Activated CD8-positive, alpha-beta T cell treated with anti-CD3 and anti-CD28 coated beads, Interleukin-2, amount 10 ng/mL, durations not matched to agents 7 days and 5 days (primary cell): ENCODE measurements at regions of chr9 and their contacts with region 1.

Region 1: DNA sequence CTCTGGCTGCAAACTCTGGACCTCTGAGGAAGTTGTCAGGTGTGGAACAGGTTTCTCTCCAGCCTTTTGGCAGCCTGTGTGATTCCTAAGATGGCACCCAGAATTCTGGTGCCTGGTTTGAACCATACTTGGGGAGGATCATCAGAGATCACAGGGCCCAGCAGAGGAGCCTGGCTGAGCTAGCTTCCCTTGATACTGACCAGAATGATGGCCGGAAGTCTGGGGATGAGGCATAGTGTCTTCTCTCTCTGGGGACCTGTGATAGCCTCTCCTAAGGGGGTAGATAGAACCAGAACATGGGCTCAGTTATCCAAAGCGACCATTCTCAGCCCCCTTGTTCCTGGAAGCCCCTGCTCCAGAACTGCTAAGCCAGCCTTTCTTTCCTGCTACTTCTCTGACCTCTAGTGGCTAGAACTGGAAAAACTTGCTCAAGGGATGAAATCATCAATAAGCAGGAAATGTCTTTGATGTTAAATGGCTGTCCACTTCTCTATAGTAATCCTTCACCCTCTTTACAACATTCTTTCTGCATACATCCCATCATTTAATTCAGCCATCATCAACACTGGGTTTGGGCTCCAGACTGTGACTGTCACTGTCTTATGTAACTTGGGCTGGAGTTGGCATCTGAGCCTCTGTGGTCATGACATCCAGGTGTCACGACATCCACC is 55.1 kb downstream of the C9orf152 start:
- DNase-seq: peak; percentile 60
- ATAC-seq: no peak
- H3K4me3 Mint-ChIP-seq: no peak overlapping the region
- H3K27ac Mint-ChIP-seq: peak overlapping the region; percentile 77
- H3K4me1 Mint-ChIP-seq: peaks cover 86% of the 10 kb centered on the region
- H3K27me3 Mint-ChIP-seq: no peaks in the 10 kb centered on the region

Region 2: GRCh38 chr9:109868722-109869121 is 284.1 kb before region 1 on chr9:
- CTCF ChIA-PET with region 1: no interaction called
- POLR2A ChIA-PET with region 1: no interaction called
- DNase-seq: no peak
- ATAC-seq: no peak
- H3K4me3 Mint-ChIP-seq: no peak overlapping the region
- H3K27ac Mint-ChIP-seq: no peak overlapping the region
- H3K4me1 Mint-ChIP-seq: no peaks in the 10 kb centered on the region
- H3K27me3 Mint-ChIP-seq: peaks cover 33% of the 10 kb centered on the region

Region 3: GRCh38 chr9:109969011-109969410 is 183.8 kb before region 1 on chr9:
- CTCF ChIA-PET with region 1: interaction called, 12 read pairs
- POLR2A ChIA-PET with region 1: interaction called, 6 read pairs
- DNase-seq: no peak
- ATAC-seq: peak; percentile 38
- H3K4me3 Mint-ChIP-seq: no peak overlapping the region
- H3K27ac Mint-ChIP-seq: peak overlapping the region; percentile 73
- H3K4me1 Mint-ChIP-seq: peaks cover 47% of the 10 kb centered on the region
- H3K27me3 Mint-ChIP-seq: peaks cover 18% of the 10 kb centered on the region

Region 4: DNA sequence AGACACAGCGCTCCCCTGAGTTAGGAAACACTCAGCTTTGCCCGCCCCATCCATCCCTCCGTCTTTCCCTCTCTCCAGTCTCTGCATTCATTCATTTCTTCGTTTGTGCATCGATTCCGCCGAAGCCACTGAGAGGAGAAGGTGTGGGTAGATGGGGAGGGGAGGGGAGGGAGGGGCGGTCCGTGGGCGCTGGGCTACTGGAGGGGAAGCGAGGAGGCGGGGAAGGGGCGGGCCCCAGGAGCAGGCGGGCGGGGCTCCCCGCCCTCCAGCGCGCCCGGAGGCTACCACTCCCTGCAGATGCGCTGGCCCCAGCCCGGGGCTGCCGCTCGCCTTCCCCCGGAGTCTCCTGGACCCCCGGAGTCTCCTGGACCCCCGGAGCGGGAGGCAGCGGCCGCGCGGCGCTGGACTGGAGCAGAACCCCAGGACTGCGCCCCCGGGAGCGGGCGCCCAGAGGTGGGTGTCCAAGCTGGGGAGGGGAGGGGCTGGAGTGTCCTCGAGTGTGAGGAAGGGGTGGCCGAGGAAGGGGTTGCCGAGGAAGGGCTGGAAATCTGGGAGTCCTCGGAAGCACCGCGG is 104.3 kb before region 1 on chr9:
- CTCF ChIA-PET with region 1: interaction called, 69 read pairs
- POLR2A ChIA-PET with region 1: interaction called, 56 read pairs
- DNase-seq: peak; percentile 84
- ATAC-seq: peak; percentile 95
- H3K4me3 Mint-ChIP-seq: peak overlapping the region; percentile 90
- H3K27ac Mint-ChIP-seq: peak overlapping the region; percentile 75
- H3K4me1 Mint-ChIP-seq: peaks cover 48% of the 10 kb centered on the region
- H3K27me3 Mint-ChIP-seq: peaks cover 15% of the 10 kb centered on the region

Region 5: DNA sequence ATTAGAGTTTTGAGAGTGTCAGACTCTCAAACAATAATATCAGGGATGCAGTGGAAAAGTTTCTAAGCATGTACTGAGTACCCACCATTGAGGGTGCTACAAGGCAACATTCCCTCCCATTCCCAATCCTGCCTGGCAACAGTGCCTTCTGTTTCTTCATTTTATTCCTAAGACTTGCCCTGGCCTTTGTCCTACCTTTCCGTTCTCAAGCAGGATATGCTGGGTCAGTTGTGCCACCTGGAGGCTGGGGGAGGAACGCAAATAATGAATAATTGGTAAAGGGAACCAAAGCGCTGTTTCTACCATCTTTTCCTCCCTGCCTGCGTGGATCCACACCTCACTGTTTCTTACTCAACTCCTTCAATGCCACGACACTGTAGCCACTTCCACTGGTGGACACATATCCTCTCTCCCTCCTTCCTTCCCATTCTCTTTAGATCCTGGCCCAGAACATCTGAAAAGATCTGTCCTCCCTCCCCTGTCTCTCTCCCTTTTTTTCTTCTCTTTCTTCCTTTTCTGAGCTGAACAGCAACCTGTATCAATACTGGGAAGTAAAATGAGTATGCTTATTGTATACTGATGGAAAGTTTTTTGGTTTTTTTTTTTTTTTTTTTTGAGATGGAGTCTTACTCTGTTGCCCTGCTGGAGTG is 94.4 kb before region 1 on chr9:
- CTCF ChIA-PET with region 1: interaction called, 69 read pairs
- POLR2A ChIA-PET with region 1: interaction called, 3 read pairs
- DNase-seq: peak; percentile 60
- ATAC-seq: no peak
- H3K4me3 Mint-ChIP-seq: no peak overlapping the region
- H3K27ac Mint-ChIP-seq: peak overlapping the region; percentile 47
- H3K4me1 Mint-ChIP-seq: peaks cover 8% of the 10 kb centered on the region
- H3K27me3 Mint-ChIP-seq: peaks cover 2% of the 10 kb centered on the region

Region 6: GRCh38 chr9:110125207-110125751 is 27.6 kb before region 1 on chr9:
- CTCF ChIA-PET with region 1: interaction called, 13 read pairs
- POLR2A ChIA-PET with region 1: interaction called, 3 read pairs
- DNase-seq: no peak
- ATAC-seq: no peak
- H3K4me3 Mint-ChIP-seq: no peak overlapping the region
- H3K27ac Mint-ChIP-seq: peak overlapping the region; percentile 53
- H3K4me1 Mint-ChIP-seq: peaks cover 21% of the 10 kb centered on the region
- H3K27me3 Mint-ChIP-seq: no peaks in the 10 kb centered on the region

Region 7: DNA sequence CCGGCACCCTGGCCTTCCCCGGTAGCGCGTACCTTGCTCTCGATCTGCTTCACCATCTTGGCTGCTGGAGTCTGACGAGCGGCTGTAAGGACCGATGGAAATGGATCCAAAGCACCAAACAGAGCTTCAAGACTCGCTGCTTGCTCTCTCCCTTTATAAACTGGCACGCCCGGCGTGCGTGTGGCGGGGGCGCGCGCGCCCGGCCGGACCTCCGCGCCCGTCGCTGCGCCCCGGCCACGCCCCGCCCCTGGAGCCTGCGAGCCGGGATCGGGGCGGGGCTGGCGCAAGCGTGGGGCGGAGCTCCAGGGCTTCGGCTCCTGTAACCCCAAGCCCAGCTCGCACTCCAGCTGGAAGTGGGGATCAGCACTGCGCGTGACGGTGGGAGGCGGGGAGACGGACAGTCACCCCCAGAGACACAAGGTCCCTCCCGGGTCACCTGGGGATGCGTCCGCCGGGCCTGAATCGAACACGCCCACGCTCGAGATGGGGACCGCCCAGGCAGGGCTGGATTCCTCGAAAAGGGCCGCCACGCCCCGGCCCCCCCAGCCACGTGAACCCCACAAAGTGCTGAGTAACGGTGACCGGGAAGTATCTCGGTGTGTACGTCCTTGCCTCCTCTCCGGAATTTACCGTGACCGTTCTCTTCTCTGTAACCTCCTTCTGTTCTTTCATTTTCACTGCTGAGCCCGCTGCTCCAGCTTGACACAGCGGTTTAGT is 103.7 kb after region 1 on chr9 and contains the start of gene TXN:
- CTCF ChIA-PET with region 1: no interaction called
- POLR2A ChIA-PET with region 1: interaction called, 12 read pairs
- DNase-seq: peak; percentile 88
- ATAC-seq: peak; percentile 85
- H3K4me3 Mint-ChIP-seq: peak within 1 kb of the TSS; percentile 88
- H3K27ac Mint-ChIP-seq: peak within 1 kb of the TSS; percentile 95
- H3K4me1 Mint-ChIP-seq: peaks cover 40% of the 10 kb centered on the region
- H3K27me3 Mint-ChIP-seq: peaks cover 2% of the 10 kb centered on the region
- total RNA-seq, gene TXN: 251 to 256 TPM